Posterior cingulate gyrus (tissue), 11 donors: ENCODE measurements at regions of chr19 and their contacts with region 1.

Region 1: DNA sequence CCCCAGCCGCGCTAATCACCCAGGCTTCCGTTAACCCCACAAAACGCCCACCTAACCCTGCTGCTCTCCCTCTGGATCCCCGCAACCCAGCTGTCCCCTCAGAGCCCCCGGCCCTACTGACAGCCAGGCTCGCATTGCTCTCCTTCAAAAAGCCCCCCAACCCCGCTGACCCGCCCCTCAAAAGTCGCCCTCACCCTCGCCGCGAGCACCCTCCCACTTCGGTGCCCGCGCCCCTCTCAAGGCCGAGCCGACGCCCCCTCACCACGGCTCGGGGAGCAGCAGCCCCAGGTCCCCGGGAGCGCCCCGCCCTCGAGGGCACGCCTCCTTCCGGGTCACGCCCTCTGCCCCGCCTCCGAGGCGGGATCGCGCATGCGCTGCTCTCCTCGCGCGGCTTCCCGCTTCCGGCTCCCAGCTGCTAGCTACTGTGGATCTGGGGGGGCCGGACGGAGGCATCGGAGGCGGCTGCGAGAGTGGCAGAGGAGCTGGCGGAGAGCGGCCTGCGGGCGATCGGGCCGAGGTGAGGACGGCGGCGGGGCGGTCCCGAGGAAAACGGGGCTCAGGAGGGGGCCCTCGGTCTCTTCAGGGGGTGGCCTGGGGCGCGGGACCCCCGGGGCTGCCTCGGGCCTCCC is 46.1 kb downstream of the ARHGEF18 start:
- DNase-seq: peak; percentile 88 to 99 (median 95)

Region 2: DNA sequence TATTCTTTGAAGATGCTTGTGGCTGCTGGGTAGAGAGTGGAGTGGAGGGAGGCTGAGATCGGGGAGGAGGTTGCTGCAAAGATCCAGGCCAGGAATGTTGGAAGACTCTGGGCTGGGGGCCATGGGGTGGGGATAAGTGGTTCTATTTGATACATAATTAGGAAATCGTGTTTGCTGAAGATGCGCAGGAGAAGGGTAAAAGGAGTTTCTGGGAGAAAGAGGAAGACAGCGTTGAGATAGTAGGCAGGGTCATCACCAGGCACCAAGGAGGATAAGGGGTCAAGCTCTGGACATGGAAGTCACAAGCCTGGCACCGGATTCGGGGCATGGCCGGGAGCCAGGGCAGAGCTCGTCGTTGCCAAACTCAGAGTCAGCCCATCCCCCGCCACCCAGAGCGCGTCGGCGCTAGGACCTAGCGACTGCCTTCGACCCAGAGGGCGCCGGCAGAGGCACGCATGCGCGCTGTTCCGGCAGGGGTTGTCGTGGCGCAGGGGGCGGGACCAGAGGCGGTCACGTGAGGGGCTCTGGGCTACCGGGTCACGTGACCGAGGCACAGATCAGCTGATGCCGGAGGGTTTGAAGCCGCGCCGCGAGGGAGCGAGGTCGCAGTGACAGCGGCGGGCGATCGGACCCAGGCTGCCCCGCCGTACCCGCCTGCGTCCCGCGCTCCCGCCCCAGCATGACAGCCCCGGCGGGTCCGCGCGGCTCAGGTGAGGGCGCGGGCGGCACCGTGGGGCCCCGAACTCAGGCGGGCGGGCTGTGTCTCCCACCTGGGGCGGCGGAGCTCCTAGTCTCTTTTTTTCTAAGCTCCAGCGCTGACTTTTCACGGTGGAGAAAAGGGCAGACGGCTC is 127.5 kb after region 1 on chr19 and contains the start of gene MCOLN1:
- intact Hi-C with region 1: loop called (anchors 5 kb)
- DNase-seq: peak; percentile 97 to 100 (median 98)

Region 3: DNA sequence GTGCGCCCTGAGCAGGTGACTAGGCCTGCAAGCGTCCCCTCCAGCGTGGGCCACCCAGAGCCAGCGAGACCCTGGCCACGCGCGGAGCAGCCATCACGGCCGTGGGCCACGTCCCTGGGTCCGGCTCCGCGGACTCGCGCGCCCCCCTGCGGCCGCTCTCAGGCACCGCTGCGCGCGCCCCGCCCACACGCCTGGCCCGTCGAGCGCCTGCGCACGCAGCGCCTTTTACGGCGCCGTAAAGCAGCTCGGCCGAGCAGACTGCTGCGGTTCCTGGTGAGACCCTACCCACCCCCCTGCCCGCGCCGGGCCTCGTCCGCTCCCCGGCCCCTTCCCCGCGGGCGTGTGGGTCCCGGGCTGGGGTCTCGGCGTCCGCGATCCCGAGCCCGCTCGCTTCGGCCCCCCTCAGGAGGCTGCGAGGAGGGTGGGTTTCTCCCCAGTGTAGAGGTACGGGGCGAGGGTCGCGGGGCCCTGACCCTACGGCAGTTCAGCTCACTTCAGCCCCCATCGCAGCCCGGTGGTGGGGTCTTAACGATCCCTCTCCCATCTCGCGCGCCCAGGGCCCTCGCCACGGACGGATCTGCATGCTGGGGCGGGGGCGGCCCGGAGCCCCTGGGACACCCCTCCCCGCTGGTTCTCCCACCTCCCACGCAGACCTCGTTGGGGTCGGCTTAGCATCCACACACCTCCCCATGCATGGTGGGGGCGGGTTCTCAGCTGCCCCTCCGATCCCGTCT is 285.9 kb after region 1 on chr19 and contains the start of gene TRAPPC5:
- intact Hi-C with region 1: no loop called
- DNase-seq: peak; percentile 75 to 98 (median 82)